AG04450 (cell line): ENCODE measurements at regions of chr7 and their contacts with region 1.

Region 1: GRCh38 chr7:34133983-34134782 is 228.8 kb downstream of the BMPER start:
- DNase-seq: peak; percentile 52
- H3K4me3 ChIP-seq: no peak overlapping the region
- H3K27ac ChIP-seq: peak overlapping the region; percentile 55
- H3K27me3 ChIP-seq: no peaks in the 10 kb centered on the region
- CTCF ChIP-seq: peak; percentile 87

Region 2: DNA sequence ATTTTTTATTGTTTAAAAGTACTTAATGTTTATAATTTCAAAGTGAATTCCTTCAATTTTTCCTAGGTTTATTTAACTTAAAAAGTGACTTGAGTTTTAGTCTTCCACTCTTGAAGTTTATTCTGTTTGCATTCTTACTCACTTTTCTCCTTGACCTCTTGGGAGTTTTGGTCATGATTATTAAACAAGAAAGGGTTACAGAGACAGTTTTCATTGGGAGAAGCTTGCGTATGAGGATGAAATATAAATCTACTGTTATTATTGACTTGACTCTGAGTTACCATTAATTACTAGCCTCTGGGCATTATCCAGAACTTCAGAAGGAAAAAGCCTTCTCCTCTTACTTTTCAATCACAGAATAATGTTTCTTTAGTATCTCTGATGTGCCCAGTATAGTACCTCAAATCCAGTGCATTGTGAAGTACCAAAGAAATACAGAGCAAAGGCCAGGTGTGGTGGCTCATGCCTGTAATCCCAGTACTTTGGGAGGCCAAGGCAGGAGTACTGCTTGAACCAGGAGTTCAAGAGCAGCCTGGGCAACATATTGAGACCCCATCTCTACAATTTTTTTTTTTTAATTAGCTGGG is 12.7 kb before region 1 on chr7:
- CTCF ChIA-PET with region 1: interaction called, 36 read pairs
- POLR2A ChIA-PET with region 1: no interaction called
- DNase-seq: no peak
- H3K4me3 ChIP-seq: no peak overlapping the region
- H3K27ac ChIP-seq: no peak overlapping the region
- H3K27me3 ChIP-seq: no peaks in the 10 kb centered on the region
- CTCF ChIP-seq: no peak

Region 3: DNA sequence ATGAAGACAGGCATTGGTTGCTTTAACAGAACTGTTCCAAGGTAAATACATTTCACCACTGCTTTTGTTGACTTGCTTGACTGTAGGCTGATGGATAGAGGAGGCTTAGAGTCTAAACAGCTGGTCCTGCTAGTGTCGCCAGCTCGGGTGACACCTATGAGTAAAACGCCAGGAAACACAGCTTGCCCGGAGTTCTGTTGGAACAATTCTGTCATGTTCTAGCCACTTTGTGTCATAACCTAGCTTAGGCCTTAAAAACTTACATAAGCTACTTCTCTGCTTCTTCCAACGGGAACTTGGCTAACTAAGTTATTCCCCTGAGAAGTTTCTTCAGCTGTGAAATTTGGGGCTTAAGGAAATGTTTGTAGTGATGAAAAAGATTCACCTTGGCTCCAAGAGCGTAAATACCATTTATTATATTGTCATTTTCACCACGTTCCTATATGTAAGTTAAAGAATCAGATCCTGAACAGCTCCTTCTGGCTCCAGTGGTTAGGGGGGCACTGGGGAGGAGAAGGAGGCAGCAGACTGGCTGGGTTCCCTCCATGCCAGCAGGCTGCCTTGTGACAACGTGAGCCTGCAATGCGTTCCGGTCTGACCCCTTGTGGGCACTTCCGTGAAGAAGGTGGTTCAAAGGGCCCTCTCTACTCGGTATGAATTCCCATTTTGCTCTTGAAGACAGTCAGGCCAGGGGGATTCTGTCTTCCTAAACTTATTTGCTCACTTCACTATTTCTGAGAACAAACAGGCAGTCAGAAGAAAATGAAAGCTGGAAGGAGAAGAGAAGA is 24.4 kb after region 1 on chr7:
- CTCF ChIA-PET with region 1: interaction called, 25 read pairs
- POLR2A ChIA-PET with region 1: no interaction called
- DNase-seq: no peak
- H3K4me3 ChIP-seq: no peak overlapping the region
- H3K27ac ChIP-seq: no peak overlapping the region
- H3K27me3 ChIP-seq: no peaks in the 10 kb centered on the region
- CTCF ChIP-seq: peak; percentile 20; the same call in 1 of the 2 replicates

Region 4: GRCh38 chr7:34165929-34166550 is 31.9 kb after region 1 on chr7:
- CTCF ChIA-PET with region 1: interaction called, 41 read pairs
- POLR2A ChIA-PET with region 1: no interaction called
- DNase-seq: no peak
- H3K4me3 ChIP-seq: no peak overlapping the region
- H3K27ac ChIP-seq: no peak overlapping the region
- H3K27me3 ChIP-seq: no peaks in the 10 kb centered on the region
- CTCF ChIP-seq: peak; percentile 84

Region 5: GRCh38 chr7:34321000-34321581 is 186.9 kb after region 1 on chr7:
- CTCF ChIA-PET with region 1: interaction called, 30 read pairs
- POLR2A ChIA-PET with region 1: no interaction called
- DNase-seq: peak; percentile 27
- H3K4me3 ChIP-seq: peak overlapping the region; percentile 14; the same call in 1 of the 2 replicates
- H3K27ac ChIP-seq: no peak overlapping the region
- H3K27me3 ChIP-seq: no peaks in the 10 kb centered on the region
- CTCF ChIP-seq: peak; percentile 92